ENCODE measurements at regions of chr3 and their contacts with region 1.

Region 1: GRCh38 chr3:5840056-5840455 is 652.5 kb downstream of the EDEM1 start:
- DNase-seq: no peak

Region 2: GRCh38 chr3:5822843-5823242 is 17.2 kb before region 1 on chr3:
- intact Hi-C with region 1: loop called in 1 of 2 experiments (anchors 1 kb)
- DNase-seq: no peak